ENCODE measurements at regions of chr9 and their contacts with region 1.

Region 1: GRCh38 chr9:110125207-110125751 is 82.7 kb downstream of the C9orf152 start:
- DNase-seq: peak in 3 of 4 donors; percentile 87 to 91 (median 89)
- ATAC-seq: peak; percentile 91
- H3K4me3 ChIP-seq: peak overlapping the region in 1 of 2 donors; percentile 28
- H3K27ac ChIP-seq: peak overlapping the region; percentile 69 to 85
- H3K4me1 ChIP-seq: peaks cover 36 to 71% of the 10 kb centered on the region in 2 donors
- H3K27me3 ChIP-seq: no peaks in the 10 kb centered on the region
- CTCF ChIP-seq: no peak

Region 2: DNA sequence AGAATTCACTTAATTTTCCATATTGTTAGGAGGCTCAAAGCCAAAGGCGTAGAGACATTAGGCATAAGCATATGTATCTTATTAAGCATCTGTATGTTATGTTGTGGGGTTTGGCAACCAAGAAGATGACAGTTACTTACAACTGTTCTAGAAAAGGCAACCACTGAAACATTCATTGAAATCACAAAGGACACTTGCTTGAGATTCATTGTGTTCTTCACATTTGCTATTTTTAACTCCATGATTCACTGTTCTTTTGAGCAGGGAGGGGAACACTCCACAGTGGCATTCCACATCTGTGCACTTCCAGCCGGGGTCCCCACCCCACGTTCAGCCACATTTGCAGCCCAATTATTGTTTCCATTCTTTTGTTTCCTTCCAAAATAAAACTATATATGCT is 238.2 kb before region 1 on chr9:
- intact Hi-C with region 1: no loop called
- DNase-seq: no peak
- ATAC-seq: peak; percentile 39
- H3K4me3 ChIP-seq: no peak overlapping the region
- H3K27ac ChIP-seq: no peak overlapping the region
- H3K4me1 ChIP-seq: peaks cover 9 to 16% of the 10 kb centered on the region in 2 donors
- H3K27me3 ChIP-seq: no peaks in the 10 kb centered on the region
- CTCF ChIP-seq: no peak

Region 3: DNA sequence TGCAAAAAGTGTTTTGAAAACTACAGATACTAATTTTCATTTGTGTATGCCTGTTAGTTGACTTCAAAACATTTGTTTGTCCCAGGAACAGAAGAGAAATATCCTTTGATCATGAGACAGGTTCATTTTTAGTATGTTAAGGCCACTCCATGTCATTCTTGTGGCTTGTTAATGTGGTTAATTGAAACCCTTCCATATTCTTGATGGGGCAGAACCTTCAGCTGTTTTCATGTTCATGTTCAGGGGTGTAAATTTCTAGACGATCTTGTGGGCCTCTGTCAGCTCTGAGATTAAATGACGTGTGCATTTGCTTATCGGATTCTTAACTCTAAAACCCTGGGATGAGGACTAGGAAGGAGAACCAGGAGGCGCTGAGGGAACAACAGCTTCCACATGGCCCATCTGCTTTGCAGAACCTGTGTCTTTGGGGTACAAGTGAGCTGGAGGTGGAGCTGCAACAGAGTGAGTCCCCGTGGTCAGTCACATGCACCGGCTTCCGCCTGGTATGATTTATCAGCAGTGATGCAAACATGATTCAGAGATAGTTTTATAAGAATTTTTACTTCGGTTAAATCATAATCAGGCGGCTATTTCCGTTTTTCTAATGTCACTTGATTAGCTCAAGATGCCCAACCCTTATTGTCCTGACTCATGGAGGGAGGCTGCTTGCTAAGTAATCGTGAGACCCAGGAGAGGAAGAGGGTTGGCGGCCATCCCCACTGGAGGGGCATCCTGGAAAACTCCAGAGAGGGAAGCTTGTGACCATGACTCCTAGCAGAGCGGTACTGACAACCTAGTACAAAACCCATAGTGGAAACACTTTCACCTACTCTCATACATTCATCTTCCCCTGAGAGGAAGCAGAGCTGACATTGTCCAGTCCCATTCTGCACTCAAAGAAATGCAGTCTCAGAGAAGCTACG is 55.7 kb before region 1 on chr9:
- intact Hi-C with region 1: loop called in 1 of 2 experiments (anchors 10 kb)
- DNase-seq: peak in 1 of 4 donors; percentile 70
- ATAC-seq: peak; percentile 62
- H3K4me3 ChIP-seq: no peak overlapping the region
- H3K27ac ChIP-seq: peak overlapping the region; percentile 43 to 51
- H3K4me1 ChIP-seq: peaks cover 16 to 74% of the 10 kb centered on the region in 2 donors
- H3K27me3 ChIP-seq: no peaks in the 10 kb centered on the region
- CTCF ChIP-seq: no peak

Region 4: GRCh38 chr9:110183208-110184145 is 58.2 kb after region 1 on chr9:
- intact Hi-C with region 1: no loop called
- DNase-seq: peak in 3 of 4 donors; percentile 51 to 76 (median 53)
- ATAC-seq: peak; percentile 89
- H3K4me3 ChIP-seq: no peak overlapping the region
- H3K27ac ChIP-seq: no peak overlapping the region
- H3K4me1 ChIP-seq: peaks cover 7 to 11% of the 10 kb centered on the region in 2 donors
- H3K27me3 ChIP-seq: no peaks in the 10 kb centered on the region
- CTCF ChIP-seq: peak; percentile 59 to 77

Region 5: DNA sequence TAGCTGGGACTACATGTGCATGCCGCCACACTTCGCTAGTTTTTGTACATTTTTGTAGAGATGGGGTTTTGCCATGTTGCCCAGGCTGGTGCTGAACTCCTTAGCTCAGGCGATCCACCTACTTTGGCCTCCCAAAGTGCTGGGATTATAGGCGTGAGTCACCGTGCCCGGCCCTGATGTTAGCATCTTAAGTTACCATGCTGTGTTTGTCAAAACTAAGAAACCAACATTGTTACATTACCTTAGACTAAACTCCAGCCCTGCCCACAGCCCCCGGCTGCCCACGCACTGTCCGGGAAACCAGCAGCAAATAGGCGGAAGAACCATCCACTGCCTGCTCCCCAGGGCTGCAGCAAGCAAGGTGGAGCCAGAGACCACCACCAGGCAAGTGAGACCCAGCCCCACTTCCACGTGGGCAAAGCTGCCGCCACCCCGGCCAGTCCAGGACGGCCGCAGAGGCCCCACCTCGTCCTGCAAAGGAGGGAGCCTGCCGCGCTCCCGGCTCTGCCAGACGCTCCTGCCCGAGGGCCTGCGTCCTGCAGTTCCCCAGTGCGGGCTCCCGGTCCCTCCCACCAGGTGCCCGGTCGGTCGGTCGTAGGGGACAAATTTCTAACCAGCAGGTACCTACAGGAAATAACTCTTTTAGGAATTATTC is 166.8 kb after region 1 on chr9:
- intact Hi-C with region 1: no loop called
- DNase-seq: peak in 1 of 4 donors; percentile 75
- ATAC-seq: no peak
- H3K4me3 ChIP-seq: no peak overlapping the region
- H3K27ac ChIP-seq: no peak overlapping the region
- H3K4me1 ChIP-seq: no peaks in the 10 kb centered on the region
- H3K27me3 ChIP-seq: no peaks in the 10 kb centered on the region
- CTCF ChIP-seq: no peak

Region 6: DNA sequence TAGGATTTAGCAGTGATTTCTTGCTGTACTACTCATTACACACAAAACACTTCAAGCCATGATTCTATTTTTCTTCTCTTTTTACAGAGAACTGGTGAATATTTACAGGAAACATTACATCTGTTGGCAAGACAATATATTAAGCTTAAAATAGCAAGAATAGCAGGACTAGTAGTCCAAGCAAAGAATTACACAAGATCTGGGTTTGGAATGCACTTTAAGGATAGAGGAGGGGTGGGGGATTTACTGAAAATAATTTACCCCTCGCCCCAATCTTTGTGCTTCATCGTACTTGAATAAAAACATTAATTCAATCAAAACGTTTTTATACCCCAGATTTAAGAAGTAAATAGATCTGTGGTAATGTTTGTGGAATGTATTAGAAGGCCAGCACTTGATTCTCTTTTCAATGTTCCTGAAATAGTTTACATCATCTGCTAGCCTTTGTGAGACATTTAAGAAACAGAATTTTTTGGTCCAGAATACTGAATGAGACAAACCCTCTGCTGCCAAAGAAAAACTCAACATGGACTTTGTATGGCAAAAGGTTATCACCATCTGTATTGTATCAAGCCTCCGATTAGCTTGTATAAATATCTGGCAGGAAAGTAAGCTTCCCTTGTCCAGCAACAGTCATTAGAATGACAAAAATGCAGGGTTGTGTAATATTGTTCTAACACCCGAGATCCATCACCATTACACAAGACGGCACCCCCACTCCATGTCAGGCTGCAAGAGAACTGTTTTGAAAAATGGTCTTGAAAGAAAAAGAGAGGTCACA is 430.5 kb after region 1 on chr9:
- intact Hi-C with region 1: no loop called
- DNase-seq: peak in 2 of 4 donors; percentile 92
- ATAC-seq: peak; percentile 86
- H3K4me3 ChIP-seq: no peak overlapping the region
- H3K27ac ChIP-seq: peak overlapping the region; percentile 23 to 45
- H3K4me1 ChIP-seq: peaks cover 3 to 5% of the 10 kb centered on the region in 2 donors
- H3K27me3 ChIP-seq: no peaks in the 10 kb centered on the region
- CTCF ChIP-seq: no peak

Measured in left lung (tissue), 14 donors.